MCF 10A (cell line): ENCODE measurements at regions of chr1 and their contacts with region 1.

Region 1: GRCh38 chr1:246931549-246932365 is at the start of gene AHCTF1:
- DNase-seq: peak; percentile 100
- H3K4me3 Mint-ChIP-seq: peak within 1 kb of the TSS; percentile 88
- H3K27ac Mint-ChIP-seq: peak within 1 kb of the TSS; percentile 95
- H3K4me1 Mint-ChIP-seq: peaks cover 29% of the 10 kb centered on the region
- H3K27me3 Mint-ChIP-seq: no peaks in the 10 kb centered on the region
- CTCF ChIP-seq: no peak
- total RNA-seq, gene AHCTF1: 79.5 and 112 TPM in 2 replicates

Region 2: DNA sequence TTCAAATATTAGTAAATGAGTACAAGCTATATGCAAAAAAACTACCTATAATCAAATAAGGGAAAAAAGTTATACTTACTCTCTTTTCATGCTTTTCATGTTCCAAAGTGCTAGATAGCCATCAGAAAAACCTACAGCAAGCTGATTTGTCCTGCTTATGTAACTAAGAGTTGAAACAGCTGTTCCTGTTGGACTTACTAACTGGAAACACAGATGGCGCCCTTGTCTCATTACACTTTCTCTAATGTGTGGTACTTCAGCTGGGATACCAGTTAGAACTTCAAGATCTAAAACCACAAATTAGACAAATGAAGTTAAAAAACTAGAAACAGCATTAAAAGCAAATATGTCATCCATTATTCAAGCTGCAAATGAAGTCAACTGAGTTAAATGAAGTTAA is 24.3 kb before region 1 on chr1:
- CTCF ChIA-PET with region 1: interaction called, 5 read pairs
- POLR2A ChIA-PET with region 1: interaction called, 104 read pairs
- intact Hi-C with region 1: no loop called
- DNase-seq: peak; percentile 78
- H3K4me3 Mint-ChIP-seq: no peak overlapping the region
- H3K27ac Mint-ChIP-seq: peak overlapping the region; percentile 25
- H3K4me1 Mint-ChIP-seq: no peaks in the 10 kb centered on the region
- H3K27me3 Mint-ChIP-seq: no peaks in the 10 kb centered on the region
- CTCF ChIP-seq: peak; percentile 74

Region 3: DNA sequence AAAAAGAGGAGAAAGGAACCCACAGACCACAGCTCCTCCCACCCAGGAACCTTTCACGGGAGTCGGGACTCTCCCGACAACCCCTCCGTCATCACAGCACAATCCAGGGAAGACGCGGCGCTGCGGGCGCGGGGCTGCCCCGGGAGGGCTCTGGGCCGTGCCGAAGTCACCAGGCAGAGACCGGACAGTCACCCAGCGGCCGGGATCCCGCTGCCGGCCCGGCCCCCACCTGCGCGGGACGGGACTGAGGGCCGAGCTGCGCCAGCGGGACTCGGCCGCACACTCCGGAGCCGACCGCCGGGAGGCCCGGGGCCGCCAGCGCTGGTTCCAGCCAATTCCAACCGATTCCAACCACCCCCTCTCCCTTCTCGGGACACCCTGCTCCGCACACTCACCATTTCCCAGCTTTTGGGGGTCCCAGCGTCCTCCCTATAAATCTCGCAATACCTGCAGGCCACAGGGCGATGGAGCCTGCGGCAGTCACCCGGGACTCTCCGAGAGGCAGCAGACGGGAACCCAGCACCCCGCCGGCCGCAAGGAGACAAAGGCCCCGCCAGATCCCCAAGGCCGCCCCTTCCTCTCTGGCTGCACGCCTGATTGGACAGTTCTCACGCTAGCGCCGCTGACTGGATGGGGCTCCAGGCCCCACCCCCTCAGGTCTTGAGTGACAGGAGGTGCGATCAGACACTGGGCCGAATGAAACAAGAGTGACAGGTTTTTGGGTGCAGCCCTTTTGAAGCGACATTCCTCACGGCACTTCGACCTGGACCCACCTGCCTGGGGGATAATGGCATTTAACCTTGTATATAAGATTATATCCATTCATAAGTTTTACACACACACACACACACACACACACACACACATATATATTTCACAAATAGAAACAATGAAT is 76.0 kb after region 1 on chr1 and contains the start of gene ZNF695:
- CTCF ChIA-PET with region 1: interaction called, 3 read pairs
- POLR2A ChIA-PET with region 1: interaction called, 33 read pairs
- intact Hi-C with region 1: loop called (anchors 2 kb)
- DNase-seq: peak; percentile 100
- H3K4me3 Mint-ChIP-seq: peak within 1 kb of the TSS; percentile 96
- H3K27ac Mint-ChIP-seq: peak within 1 kb of the TSS; percentile 99
- H3K4me1 Mint-ChIP-seq: no peaks in the 10 kb centered on the region
- H3K27me3 Mint-ChIP-seq: no peaks in the 10 kb centered on the region
- CTCF ChIP-seq: no peak
- total RNA-seq, gene ZNF695: 8.7 and 13.8 TPM in 2 replicates

Region 4: GRCh38 chr1:247103859-247104591 is 172.3 kb after region 1 on chr1 and contains the start of gene ZNF669:
- CTCF ChIA-PET with region 1: no interaction called
- POLR2A ChIA-PET with region 1: interaction called, 23 read pairs
- intact Hi-C with region 1: no loop called
- DNase-seq: peak; percentile 99
- H3K4me3 Mint-ChIP-seq: peak within 1 kb of the TSS; percentile 94
- H3K27ac Mint-ChIP-seq: peak within 1 kb of the TSS; percentile 93
- H3K4me1 Mint-ChIP-seq: peaks cover 6% of the 10 kb centered on the region
- H3K27me3 Mint-ChIP-seq: no peaks in the 10 kb centered on the region
- CTCF ChIP-seq: no peak
- total RNA-seq, gene ZNF669: 11.6 and 11.9 TPM in 2 replicates

Region 5: GRCh38 chr1:247294282-247294681 is 362.5 kb after region 1 on chr1:
- CTCF ChIA-PET with region 1: no interaction called
- POLR2A ChIA-PET with region 1: no interaction called
- intact Hi-C with region 1: loop called (anchors 1 kb)
- DNase-seq: peak; percentile 38
- H3K4me3 Mint-ChIP-seq: no peak overlapping the region
- H3K27ac Mint-ChIP-seq: no peak overlapping the region
- H3K4me1 Mint-ChIP-seq: no peaks in the 10 kb centered on the region
- H3K27me3 Mint-ChIP-seq: no peaks in the 10 kb centered on the region
- CTCF ChIP-seq: no peak